HCT116 (cell line): ENCODE measurements at regions of chr7 and their contacts with region 1.

Region 1: GRCh38 chr7:5665094-5666025 is 116.1 kb downstream of the RNF216 start:
- DNase-seq: peak; percentile 62
- ATAC-seq: peak; percentile 93
- H3K4me3 ChIP-seq: no peak overlapping the region
- H3K27ac ChIP-seq: no peak overlapping the region
- H3K4me1 ChIP-seq: peaks cover 0 to 3% of the 10 kb centered on the region in 2 experiments; a peak in 1 of 4 replicates
- H3K27me3 ChIP-seq: no peaks in the 10 kb centered on the region
- CTCF ChIP-seq: peak; percentile 75 to 94 (median 92)
- POLR2A ChIP-seq: no peak
- RAD21 ChIP-seq: peak; percentile 96

Region 2: GRCh38 chr7:4527988-4528641 is 1137.2 kb before region 1 on chr7:
- CTCF ChIA-PET with region 1: no interaction called
- POLR2A ChIA-PET with region 1: no interaction called
- RAD21 ChIA-PET with region 1: no interaction called
- intact Hi-C with region 1: no loop called
- DNase-seq: peak; percentile 6
- ATAC-seq: no peak
- H3K4me3 ChIP-seq: no peak overlapping the region
- H3K27ac ChIP-seq: no peak overlapping the region
- H3K4me1 ChIP-seq: no peaks in the 10 kb centered on the region
- H3K27me3 ChIP-seq: no peaks in the 10 kb centered on the region; the same call in 1 of the 2 replicates
- CTCF ChIP-seq: no peak
- POLR2A ChIP-seq: no peak
- RAD21 ChIP-seq: no peak

Region 3: DNA sequence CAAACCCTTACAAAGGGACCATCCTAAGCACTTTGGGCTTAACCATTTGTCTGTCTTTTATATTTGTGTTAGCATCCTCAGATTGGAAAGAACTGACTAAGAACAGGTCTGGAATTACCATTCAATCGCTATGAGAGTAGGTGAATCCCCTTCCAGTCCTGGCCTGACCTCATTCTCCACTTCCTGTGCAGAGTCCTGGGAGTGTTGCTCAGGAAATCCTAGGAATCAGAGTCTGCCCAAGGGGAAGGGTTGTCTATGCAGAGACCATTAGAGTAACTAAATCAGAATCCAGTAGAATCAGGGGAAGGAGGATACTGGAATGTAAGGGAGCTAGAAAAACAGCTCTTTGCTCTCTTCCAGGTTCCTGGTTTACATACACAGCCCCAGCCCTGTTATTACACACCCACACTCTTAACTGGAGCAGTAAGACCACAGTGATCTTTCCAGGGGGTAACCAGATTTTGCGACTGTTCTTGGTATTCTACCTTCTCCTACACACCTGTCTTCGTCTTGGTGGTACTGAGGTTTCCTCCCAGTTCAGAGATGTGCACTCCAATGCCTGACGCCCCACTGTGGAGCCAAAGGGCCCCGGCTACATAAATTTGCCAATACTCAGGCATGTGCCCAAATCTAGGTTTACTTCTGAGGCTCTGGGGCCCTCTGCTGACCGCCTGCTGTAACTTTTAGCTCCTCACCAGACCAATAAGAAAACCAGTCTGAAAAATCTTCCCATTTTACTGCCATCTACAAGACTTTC is 12.4 kb after region 1 on chr7:
- CTCF ChIA-PET with region 1: interaction called, 14 read pairs
- POLR2A ChIA-PET with region 1: no interaction called
- RAD21 ChIA-PET with region 1: no interaction called
- intact Hi-C with region 1: no loop called
- DNase-seq: peak; percentile 34
- ATAC-seq: peak; percentile 88
- H3K4me3 ChIP-seq: no peak overlapping the region
- H3K27ac ChIP-seq: no peak overlapping the region
- H3K4me1 ChIP-seq: peaks cover 0 to 6% of the 10 kb centered on the region in 2 experiments; a peak in 1 of 4 replicates
- H3K27me3 ChIP-seq: no peaks in the 10 kb centered on the region
- CTCF ChIP-seq: peak; percentile 72 to 80 (median 74)
- POLR2A ChIP-seq: no peak
- RAD21 ChIP-seq: peak; percentile 83

Region 4: DNA sequence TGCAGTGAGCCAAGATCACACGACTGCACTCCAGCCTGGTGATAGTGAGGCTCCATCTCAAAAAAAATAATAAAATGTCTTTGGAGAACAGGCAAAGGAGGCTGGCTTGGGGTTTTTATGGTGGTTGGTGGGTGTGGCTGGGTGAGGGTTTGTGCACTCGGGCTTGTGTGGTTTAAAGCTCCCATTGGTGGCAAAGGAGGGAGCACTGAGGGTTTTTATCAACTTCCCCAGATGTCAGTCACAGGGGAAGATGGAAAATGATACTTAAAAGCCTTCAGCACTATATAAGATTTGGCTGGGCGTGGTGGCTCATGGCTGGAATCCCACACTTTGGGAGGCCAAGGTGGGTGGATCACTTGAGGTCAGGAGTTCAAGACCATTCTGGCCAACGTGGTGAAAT is 132.4 kb after region 1 on chr7:
- CTCF ChIA-PET with region 1: no interaction called
- POLR2A ChIA-PET with region 1: no interaction called
- RAD21 ChIA-PET with region 1: no interaction called
- intact Hi-C with region 1: no loop called
- DNase-seq: no peak
- ATAC-seq: no peak
- H3K4me3 ChIP-seq: no peak overlapping the region
- H3K27ac ChIP-seq: no peak overlapping the region
- H3K4me1 ChIP-seq: peaks cover 0 to 4% of the 10 kb centered on the region in 2 experiments; a peak in 1 of 4 replicates
- H3K27me3 ChIP-seq: no peaks in the 10 kb centered on the region
- CTCF ChIP-seq: no peak
- POLR2A ChIP-seq: no peak
- RAD21 ChIP-seq: no peak